Activated naive CD4-positive, alpha-beta T cell treated with anti-CD3 and anti-CD28 coated beads for 36 hours (primary cell): ENCODE measurements at regions of chr11 and their contacts with region 1.

Region 1: DNA sequence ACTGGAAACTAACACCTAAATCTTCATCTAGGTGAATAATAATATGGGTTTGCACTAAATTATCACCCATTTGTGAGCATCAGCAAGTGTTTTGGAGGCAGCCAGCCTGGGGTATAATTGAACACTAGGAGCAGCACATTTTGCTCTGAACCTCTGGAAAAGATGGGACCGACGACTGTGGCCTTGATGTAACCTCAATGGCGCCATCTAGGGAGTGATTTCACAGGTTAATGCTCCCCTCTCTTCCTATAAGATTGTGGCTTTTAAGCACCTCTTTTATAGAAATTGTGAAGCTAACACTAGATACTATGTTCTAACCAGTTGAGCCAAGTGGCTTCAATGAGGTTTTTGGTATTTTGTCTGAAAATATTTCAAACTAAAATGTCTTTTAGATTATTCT is 203.7 kb downstream of the NELL1 start:
- DNase-seq: peak; percentile 23
- H3K4me3 Mint-ChIP-seq: no peak overlapping the region
- H3K27ac Mint-ChIP-seq: no peak overlapping the region
- H3K4me1 Mint-ChIP-seq: no peaks in the 10 kb centered on the region
- H3K27me3 Mint-ChIP-seq: no peaks in the 10 kb centered on the region

Region 2: GRCh38 chr11:20671856-20672546 is 201.1 kb before region 1 on chr11:
- CTCF ChIA-PET with region 1: no interaction called
- intact Hi-C with region 1: loop called (anchors 10 kb)
- DNase-seq: no peak
- H3K4me3 Mint-ChIP-seq: no peak overlapping the region
- H3K27ac Mint-ChIP-seq: no peak overlapping the region
- H3K4me1 Mint-ChIP-seq: peaks cover 12% of the 10 kb centered on the region
- H3K27me3 Mint-ChIP-seq: peaks cover 66% of the 10 kb centered on the region

Region 3: GRCh38 chr11:22479208-22479607 is 1606.2 kb after region 1 on chr11:
- CTCF ChIA-PET with region 1: no interaction called
- intact Hi-C with region 1: no loop called
- DNase-seq: no peak
- H3K4me3 Mint-ChIP-seq: no peak overlapping the region
- H3K27ac Mint-ChIP-seq: no peak overlapping the region
- H3K4me1 Mint-ChIP-seq: no peaks in the 10 kb centered on the region
- H3K27me3 Mint-ChIP-seq: peaks cover 14% of the 10 kb centered on the region